ENCODE measurements at regions of chr17 and their contacts with region 1.

Region 1: DNA sequence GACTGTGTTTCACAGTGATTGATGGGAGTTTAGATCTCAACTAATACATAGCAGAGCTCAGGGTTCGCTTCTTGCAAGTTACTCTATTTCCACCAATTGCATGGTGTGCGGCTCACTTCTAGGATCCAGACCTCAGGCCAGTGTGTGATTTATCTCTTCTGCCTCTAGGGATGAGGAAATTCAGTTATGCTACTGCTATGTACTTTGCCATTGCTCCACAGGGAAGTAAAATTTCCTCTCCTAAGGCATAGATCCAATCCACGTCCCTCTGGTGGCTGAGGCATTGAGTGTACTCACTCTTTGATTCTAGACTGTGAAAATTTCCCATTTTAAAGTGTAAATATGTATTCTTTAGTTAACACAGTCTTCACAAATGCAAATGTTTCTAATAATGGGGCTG is 214.1 kb downstream of the HS3ST3B1 start:
- DNase-seq: no peak
- ATAC-seq: no peak
- H3K4me3 Mint-ChIP-seq: no peak overlapping the region
- H3K27ac Mint-ChIP-seq: no peak overlapping the region
- H3K4me1 Mint-ChIP-seq: peaks cover 16% of the 10 kb centered on the region; the same call in 1 of the 2 replicates
- H3K27me3 Mint-ChIP-seq: no peaks in the 10 kb centered on the region; the same call in 1 of the 2 replicates
- CTCF ChIP-seq: no peak

Region 2: DNA sequence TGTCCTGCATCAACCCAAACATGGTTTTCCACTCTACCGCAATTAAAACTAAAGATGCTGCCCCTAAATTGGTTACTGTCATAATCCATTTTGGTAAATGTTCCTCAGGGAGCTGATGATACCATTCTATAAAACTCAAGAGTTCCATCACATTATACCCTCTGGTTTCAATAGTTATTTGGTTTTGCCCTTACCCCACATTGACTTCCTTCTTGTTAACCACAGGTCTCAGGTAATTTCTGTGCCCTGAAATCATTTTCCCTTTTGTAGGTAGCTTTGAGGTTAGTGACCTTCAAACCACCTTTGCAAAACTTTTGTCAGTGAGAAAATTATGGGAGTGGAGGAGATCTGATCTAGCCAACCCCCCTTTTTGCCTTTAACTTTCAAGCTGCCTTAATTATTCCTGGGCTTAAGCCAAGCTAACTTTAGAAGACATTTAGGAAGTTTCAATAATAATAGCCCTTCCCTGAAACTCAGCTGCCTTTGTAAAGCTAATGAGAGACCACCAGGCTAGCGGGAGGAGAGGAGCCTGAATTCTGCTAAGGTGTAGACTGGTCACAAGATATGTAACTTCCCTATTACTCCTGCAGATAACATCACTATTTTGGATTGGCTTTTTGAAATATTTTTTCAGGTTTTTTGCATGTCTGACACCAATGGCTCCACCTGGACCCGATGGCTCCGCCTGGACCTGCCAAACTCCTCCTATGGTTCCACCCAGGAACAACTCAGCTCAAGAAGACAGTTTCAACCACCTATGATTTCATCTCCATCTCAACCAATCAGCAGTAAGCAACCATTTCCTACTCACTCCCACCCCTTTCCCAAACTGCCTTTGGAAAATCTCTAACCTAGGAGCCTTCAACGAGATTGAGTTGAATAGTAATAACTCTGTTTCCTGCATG is 10.8 kb after region 1 on chr17:
- CTCF ChIA-PET with region 1: interaction called, 17 read pairs
- POLR2A ChIA-PET with region 1: interaction called, 3 read pairs
- DNase-seq: peak; percentile 22
- ATAC-seq: peak; percentile 91
- H3K4me3 Mint-ChIP-seq: peak overlapping the region; percentile 40
- H3K27ac Mint-ChIP-seq: peak overlapping the region; percentile 99
- H3K4me1 Mint-ChIP-seq: peaks cover 50% of the 10 kb centered on the region
- H3K27me3 Mint-ChIP-seq: no peaks in the 10 kb centered on the region
- CTCF ChIP-seq: no peak

Region 3: DNA sequence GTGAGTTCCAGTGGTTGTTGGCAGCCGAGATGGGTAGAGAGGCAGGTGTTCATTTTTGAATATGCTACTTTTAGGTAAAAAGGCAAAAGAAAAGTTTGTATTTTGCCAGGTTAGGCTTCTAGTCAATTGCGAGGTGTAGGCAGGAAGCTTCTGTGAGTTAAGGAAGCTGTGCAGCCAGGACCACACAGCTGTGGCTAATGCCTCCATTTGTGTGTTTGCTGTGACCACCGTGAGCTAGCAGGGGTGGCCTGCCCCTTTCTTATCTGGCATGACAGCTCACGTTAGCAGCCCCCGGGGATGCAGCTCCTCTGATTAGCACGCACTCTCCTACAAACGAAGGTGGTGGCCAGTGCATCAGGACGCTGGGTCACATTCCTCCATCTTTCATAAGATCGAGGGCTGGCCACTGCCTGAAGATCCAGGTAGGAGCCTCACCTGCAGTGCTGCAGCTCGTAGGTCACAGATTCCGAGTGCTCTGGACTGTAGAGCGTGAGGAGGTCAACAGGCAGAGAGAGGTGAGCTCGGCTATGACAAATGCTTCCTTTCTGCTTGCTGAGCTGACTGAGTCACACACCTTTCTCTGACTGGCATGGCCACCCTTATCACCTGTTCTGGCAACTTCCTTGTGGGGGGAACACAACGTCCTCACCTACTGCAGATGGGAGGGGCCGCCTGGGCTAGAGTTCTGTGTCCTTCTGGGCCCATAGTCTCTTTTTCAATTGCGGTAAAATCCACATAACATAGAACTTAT is 30.3 kb after region 1 on chr17:
- CTCF ChIA-PET with region 1: no interaction called
- POLR2A ChIA-PET with region 1: no interaction called
- DNase-seq: no peak
- ATAC-seq: no peak; the same call in 1 of the 2 replicates
- H3K4me3 Mint-ChIP-seq: no peak overlapping the region
- H3K27ac Mint-ChIP-seq: no peak overlapping the region
- H3K4me1 Mint-ChIP-seq: peaks cover 23% of the 10 kb centered on the region
- H3K27me3 Mint-ChIP-seq: no peaks in the 10 kb centered on the region; the same call in 1 of the 2 replicates
- CTCF ChIP-seq: no peak